ENCODE measurements at regions of chr1 and their contacts with region 1.

Region 1: DNA sequence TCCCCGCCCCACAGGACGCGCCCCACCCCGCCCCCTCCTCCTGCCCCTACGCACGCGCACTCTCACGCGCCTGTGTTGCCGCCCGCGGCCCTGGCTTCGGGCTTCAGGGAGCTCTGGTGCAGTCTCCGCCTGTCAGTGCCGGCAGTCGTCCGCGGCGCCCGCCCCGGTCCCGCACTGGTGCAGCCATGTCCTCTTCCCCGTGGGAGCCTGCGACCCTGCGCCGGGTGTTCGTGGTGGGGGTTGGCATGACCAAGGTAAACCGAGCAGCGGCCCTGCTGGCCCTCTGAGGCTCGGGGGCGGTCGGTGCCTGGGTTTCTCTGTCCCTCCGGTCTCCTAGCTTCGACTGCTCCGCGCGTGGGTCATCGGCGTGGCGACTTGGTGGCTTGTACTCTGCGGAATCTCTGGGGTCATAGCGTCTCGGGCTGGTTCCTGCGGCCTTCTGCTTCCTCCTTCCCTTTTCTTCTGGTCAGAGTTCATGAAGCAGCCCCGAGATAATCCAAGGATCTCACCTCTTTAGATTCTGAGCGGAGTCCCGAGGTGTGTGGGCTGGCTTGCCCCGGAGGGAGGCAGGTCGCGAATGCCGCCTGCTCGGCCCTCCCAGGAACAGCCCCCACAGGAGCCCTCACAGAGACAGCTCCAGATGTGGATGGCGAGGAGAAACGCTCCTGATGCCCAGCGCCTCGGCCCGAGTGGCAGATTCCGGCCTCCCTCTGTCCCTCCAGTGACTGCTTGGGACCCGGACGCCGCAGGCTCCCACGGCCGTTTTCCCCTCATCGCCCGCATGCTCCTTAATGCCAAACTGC is at the start of gene SCP2:
- DNase-seq: peak; percentile 89 to 90
- ATAC-seq: peak; percentile 94 to 96 (median 95)
- H3K4me3 ChIP-seq: peak within 1 kb of the TSS; percentile 78
- H3K27ac ChIP-seq: peak within 1 kb of the TSS; percentile 86
- H3K4me1 ChIP-seq: no peaks in the 10 kb centered on the region
- H3K27me3 ChIP-seq: no peaks in the 10 kb centered on the region
- CTCF ChIP-seq: no peak
- total RNA-seq, gene SCP2: 75.9 to 96.9 (median 90.4) TPM

Region 2: GRCh38 chr1:52726265-52727113 is 200.9 kb before region 1 on chr1 and contains the start of gene ZYG11B:
- intact Hi-C with region 1: loop called in 1 of 2 experiments (anchors 10 kb)
- DNase-seq: peak; percentile 90 to 96
- ATAC-seq: peak; percentile 97 to 99 (median 98)
- H3K4me3 ChIP-seq: peak within 1 kb of the TSS; percentile 96
- H3K27ac ChIP-seq: peak within 1 kb of the TSS; percentile 95
- H3K4me1 ChIP-seq: peaks cover 30% of the 10 kb centered on the region
- H3K27me3 ChIP-seq: no peaks in the 10 kb centered on the region
- CTCF ChIP-seq: no peak
- total RNA-seq, gene ZYG11B: 72.0 to 152 (median 97.1) TPM

Region 3: GRCh38 chr1:52842643-52843309 is 84.6 kb before region 1 on chr1 and contains the start of gene ZYG11A:
- intact Hi-C with region 1: loop called in 1 of 2 experiments (anchors 10 kb)
- DNase-seq: peak; percentile 59 to 74
- ATAC-seq: peak; percentile 61 to 90 (median 88)
- H3K4me3 ChIP-seq: peak within 1 kb of the TSS; percentile 63
- H3K27ac ChIP-seq: no peak within 1 kb of the TSS
- H3K4me1 ChIP-seq: peaks cover 8% of the 10 kb centered on the region
- H3K27me3 ChIP-seq: peaks cover 0 to 47% (median 11%) of the 10 kb centered on the region in 3 donors
- CTCF ChIP-seq: peak; percentile 29
- total RNA-seq, gene ZYG11A: 0.13 TPM in 1 of 4 donors, not detected in the others

Measured in psoas muscle (tissue), 8 donors.